Breast epithelium (tissue), 4 donors: ENCODE measurements at regions of chr9 and their contacts with region 1.

Region 1: DNA sequence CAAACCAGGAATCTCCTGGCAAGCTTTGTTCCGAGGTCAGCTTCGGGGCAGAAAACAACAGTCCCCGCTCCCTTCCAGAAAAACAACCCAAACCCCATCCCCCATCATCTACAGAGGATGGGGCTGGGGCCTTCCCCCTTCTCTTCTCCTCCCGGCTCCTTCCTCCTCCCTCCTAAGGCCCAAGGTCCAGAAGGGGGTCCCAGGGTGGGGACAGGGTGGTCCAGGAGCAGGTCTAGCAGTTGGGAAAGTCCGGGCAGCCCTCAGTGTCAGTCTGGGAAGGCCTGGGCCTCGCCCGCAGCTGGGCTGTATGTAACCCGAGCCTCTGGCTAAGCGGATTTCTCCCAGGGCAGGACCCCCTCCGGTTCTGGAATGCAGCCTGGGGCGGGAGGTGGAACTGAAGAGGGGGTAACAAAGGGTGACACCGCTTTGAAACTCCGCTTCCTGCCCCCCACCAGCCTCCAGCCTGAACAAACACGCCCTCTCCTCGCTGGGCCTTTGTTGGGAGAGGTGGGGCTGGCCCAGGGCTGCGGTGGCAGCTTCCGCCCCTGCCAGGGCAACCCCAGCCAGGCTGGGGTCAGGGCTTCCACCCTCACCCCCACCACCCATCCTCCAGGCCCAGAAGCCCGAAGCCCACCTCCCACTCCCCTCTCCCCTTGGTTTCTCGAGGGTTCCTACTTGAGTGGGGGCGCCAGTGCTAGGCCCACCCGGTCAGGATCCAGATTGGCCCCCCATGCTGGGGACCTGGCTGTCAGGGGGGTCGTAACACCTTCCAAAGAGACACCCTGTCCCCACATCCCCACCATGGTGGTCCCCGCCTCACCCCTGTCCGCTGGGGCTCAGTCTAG is 63.5 kb downstream of the C9orf50 start:
- DNase-seq: no peak
- H3K4me3 ChIP-seq: no peak overlapping the region
- H3K27ac ChIP-seq: peak overlapping the region in 1 of 2 donors; percentile 52
- H3K4me1 ChIP-seq: no peaks in the 10 kb centered on the region
- H3K27me3 ChIP-seq: no peaks in the 10 kb centered on the region
- CTCF ChIP-seq: no peak
- POLR2A ChIP-seq: no peak

Region 2: DNA sequence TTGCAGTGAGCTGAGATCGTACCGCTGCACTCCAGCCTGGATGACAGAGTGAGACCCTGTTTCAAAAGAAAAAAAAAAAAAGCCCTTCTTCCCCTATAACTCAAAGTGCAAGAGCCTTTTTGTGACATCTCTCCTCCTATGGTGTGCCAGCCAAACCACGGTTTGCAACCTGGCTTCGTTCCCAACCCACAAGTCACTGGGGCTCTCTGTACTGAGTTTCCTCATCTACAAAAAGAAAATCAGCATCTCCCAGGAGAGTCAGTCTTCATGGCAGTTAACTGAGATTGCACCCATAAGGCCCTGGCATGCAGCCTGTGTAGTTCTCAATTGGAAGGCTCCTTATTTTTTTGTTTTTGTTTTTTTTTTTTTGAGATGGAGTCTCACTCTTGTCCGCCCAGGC is 1086.9 kb before region 1 on chr9:
- intact Hi-C with region 1: no loop called
- DNase-seq: no peak
- H3K4me3 ChIP-seq: no peak overlapping the region
- H3K27ac ChIP-seq: no peak overlapping the region
- H3K4me1 ChIP-seq: no peaks in the 10 kb centered on the region
- H3K27me3 ChIP-seq: no peaks in the 10 kb centered on the region
- CTCF ChIP-seq: no peak
- POLR2A ChIP-seq: no peak

Region 3: DNA sequence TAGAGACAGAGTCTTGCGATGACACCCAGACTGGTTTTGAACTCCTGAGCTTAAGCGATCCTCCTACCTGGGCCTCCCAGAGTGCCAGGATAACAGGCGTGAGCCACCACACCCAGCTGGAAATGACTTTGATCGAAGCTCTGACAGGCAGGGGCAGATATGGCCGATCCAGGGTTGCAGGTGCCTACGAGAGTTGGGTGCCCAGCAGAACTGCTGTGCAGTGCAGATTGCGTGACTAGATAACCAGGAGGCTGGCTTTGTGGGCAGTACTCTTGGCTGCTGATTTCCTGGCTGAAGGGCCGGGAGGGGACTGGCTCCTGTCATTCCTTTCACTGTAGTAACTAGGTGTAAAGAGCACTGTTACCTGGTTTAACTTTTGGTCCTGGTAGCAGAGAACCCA is 758.5 kb before region 1 on chr9:
- intact Hi-C with region 1: no loop called
- DNase-seq: no peak
- H3K4me3 ChIP-seq: no peak overlapping the region
- H3K27ac ChIP-seq: no peak overlapping the region
- H3K4me1 ChIP-seq: no peaks in the 10 kb centered on the region
- H3K27me3 ChIP-seq: no peaks in the 10 kb centered on the region
- CTCF ChIP-seq: no peak
- POLR2A ChIP-seq: no peak

Region 4: GRCh38 chr9:129225815-129226214 is 331.6 kb before region 1 on chr9:
- intact Hi-C with region 1: no loop called
- DNase-seq: no peak
- H3K4me3 ChIP-seq: no peak overlapping the region
- H3K27ac ChIP-seq: peak overlapping the region; percentile 52 to 74
- H3K4me1 ChIP-seq: no peaks in the 10 kb centered on the region
- H3K27me3 ChIP-seq: no peaks in the 10 kb centered on the region
- CTCF ChIP-seq: no peak
- POLR2A ChIP-seq: no peak

Region 5: GRCh38 chr9:129594632-129595031 is 37.2 kb after region 1 on chr9:
- intact Hi-C with region 1: loop called (anchors 1 kb)
- DNase-seq: no peak
- H3K4me3 ChIP-seq: no peak overlapping the region
- H3K27ac ChIP-seq: peak overlapping the region; percentile 75 to 77
- H3K4me1 ChIP-seq: peaks cover 4 to 10% of the 10 kb centered on the region in 2 donors
- H3K27me3 ChIP-seq: no peaks in the 10 kb centered on the region
- CTCF ChIP-seq: no peak
- POLR2A ChIP-seq: no peak

Region 6: DNA sequence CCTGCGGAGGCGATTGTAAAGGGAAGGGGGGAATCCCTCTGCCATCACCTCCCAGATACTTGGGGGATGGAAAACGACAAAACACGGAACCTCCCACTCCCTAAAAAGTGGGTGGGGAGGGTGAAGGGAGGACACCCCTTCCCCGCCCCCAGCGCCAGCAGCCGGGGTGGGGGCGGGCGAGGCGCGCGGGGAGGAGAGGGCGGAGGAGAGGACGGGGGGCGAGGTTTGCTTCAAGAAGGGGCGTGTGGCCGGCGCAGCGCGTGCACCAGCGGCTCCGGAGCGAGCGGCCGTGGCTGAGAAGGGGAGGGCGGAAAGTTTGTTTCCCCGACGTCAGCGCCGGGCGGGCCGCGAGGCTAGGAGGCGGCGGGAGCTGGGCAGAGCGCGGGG is 108.0 kb after region 1 on chr9 and contains the start of gene PRRX2:
- intact Hi-C with region 1: no loop called
- DNase-seq: no peak
- H3K4me3 ChIP-seq: peak within 1 kb of the TSS; percentile 48 to 80 (median 58)
- H3K27ac ChIP-seq: peak within 1 kb of the TSS; percentile 55 to 85
- H3K4me1 ChIP-seq: no peaks in the 10 kb centered on the region
- H3K27me3 ChIP-seq: no peaks in the 10 kb centered on the region
- CTCF ChIP-seq: no peak
- POLR2A ChIP-seq: no peak
- total RNA-seq, gene PRRX2: 4.4 to 35.1 (median 9.9) TPM